GM12878 (cell line): ENCODE measurements at regions of chr1 and their contacts with region 1.

Region 1: GRCh38 chr1:89085781-89086180 is 20.8 kb upstream of the GBP1 start:
- DNase-seq: no peak
- ATAC-seq: peak; percentile 71
- H3K4me3 ChIP-seq: no peak overlapping the region
- H3K27ac ChIP-seq: no peak overlapping the region
- H3K4me1 ChIP-seq: no peaks in the 10 kb centered on the region
- H3K27me3 ChIP-seq: no peaks in the 10 kb centered on the region; a peak in 1 of 4 replicates
- CTCF ChIP-seq: peak; percentile 56 to 72 (median 61); a peak in 5 of 6 replicates
- EP300 ChIP-seq: no peak
- POLR2A ChIP-seq: no peak
- RAD21 ChIP-seq: peak; percentile 79

Region 2: GRCh38 chr1:89064632-89065031 is 21.1 kb before region 1 on chr1:
- CTCF ChIA-PET with region 1: interaction called, 6 read pairs
- POLR2A ChIA-PET with region 1: no interaction called
- RAD21 ChIA-PET with region 1: interaction called, 5 read pairs
- SMC1A ChIA-PET with region 1: interaction called, 15 read pairs
- in situ Hi-C with region 1: no loop called
- intact Hi-C with region 1: no loop called
- DNase-seq: no peak
- ATAC-seq: peak; percentile 73
- H3K4me3 ChIP-seq: peak overlapping the region; percentile 80
- H3K27ac ChIP-seq: peak overlapping the region; percentile 94
- H3K4me1 ChIP-seq: no peaks in the 10 kb centered on the region
- H3K27me3 ChIP-seq: no peaks in the 10 kb centered on the region
- CTCF ChIP-seq: no peak
- EP300 ChIP-seq: no peak
- POLR2A ChIP-seq: no peak
- RAD21 ChIP-seq: no peak

Region 3: GRCh38 chr1:89274411-89274857 is 188.7 kb after region 1 on chr1:
- CTCF ChIA-PET with region 1: interaction called, 34 read pairs
- POLR2A ChIA-PET with region 1: no interaction called
- RAD21 ChIA-PET with region 1: interaction called, 31 read pairs
- SMC1A ChIA-PET with region 1: interaction called, 23 read pairs
- in situ Hi-C with region 1: no loop called
- intact Hi-C with region 1: loop called (anchors 2 kb)
- DNase-seq: no peak
- ATAC-seq: 0 out of 3 replicates have a peak, but pooled peaks have one; percentile 26
- H3K4me3 ChIP-seq: no peak overlapping the region
- H3K27ac ChIP-seq: no peak overlapping the region
- H3K4me1 ChIP-seq: no peaks in the 10 kb centered on the region
- H3K27me3 ChIP-seq: no peaks in the 10 kb centered on the region
- CTCF ChIP-seq: no peak
- EP300 ChIP-seq: no peak
- POLR2A ChIP-seq: no peak
- RAD21 ChIP-seq: no peak